Heart left ventricle (tissue), 16 donors: ENCODE measurements at regions of chr9 and their contacts with region 1.

Region 1: DNA sequence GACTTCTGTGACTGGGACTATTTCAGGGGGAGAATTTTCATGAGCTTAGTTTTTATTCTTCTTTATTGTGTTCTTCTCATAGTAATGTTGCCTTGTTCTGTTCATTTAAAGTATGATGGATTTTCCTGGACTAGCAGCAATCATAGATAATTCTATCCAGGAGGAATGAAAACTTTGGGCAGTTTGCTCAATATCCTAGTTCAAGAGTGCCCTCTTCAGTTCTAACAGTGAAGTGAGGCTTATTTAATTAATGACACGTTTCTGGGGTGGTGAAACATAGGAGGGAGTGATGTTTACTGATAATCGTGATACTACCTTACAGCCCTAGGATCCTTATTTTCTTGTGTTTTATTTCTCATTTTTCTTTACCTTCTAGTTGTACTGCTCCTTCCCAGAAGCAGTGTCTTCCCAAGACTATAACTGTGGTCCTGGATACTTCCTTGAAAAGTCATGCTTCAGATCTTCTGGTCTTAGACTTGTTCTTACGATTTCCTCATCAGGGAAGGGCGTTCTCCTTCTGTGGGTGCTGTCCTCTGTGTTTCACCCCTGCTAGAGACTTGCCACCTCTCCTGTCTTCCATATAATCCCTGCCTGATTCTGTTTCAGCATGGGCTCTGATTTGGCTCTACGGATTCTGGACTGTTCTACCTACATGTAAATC is 57.4 kb downstream of the CFAP95 start:
- DNase-seq: no peak
- ATAC-seq: peak in 3 of 4 donors; percentile 48 to 67 (median 52)
- H3K4me3 ChIP-seq: no peak overlapping the region
- H3K27ac ChIP-seq: no peak overlapping the region
- H3K4me1 ChIP-seq: peaks cover 0 to 14% (median 0%) of the 10 kb centered on the region in 12 donors
- H3K27me3 ChIP-seq: no peaks in the 10 kb centered on the region
- CTCF ChIP-seq: peak; percentile 39 to 69 (median 55)
- POLR2A ChIP-seq: no peak

Region 2: GRCh38 chr9:69044240-69045219 is 833.5 kb before region 1 on chr9:
- intact Hi-C with region 1: loop called in 1 of 10 experiments (anchors 10 kb)
- DNase-seq: peak in 1 of 5 donors; percentile 81
- ATAC-seq: peak; percentile 38 to 81 (median 70)
- H3K4me3 ChIP-seq: no peak overlapping the region
- H3K27ac ChIP-seq: peak overlapping the region in 8 of 12 donors; percentile 15 to 71 (median 52)
- H3K4me1 ChIP-seq: peaks cover 0 to 58% (median 17%) of the 10 kb centered on the region in 12 donors
- H3K27me3 ChIP-seq: no peaks in the 10 kb centered on the region
- CTCF ChIP-seq: no peak
- POLR2A ChIP-seq: no peak

Region 3: GRCh38 chr9:69549310-69550202 is 328.4 kb before region 1 on chr9:
- intact Hi-C with region 1: loop called in 5 of 10 experiments (anchors 5 to 10 kb)
- DNase-seq: no peak
- ATAC-seq: peak in 3 of 4 donors; percentile 39 to 70 (median 44)
- H3K4me3 ChIP-seq: no peak overlapping the region
- H3K27ac ChIP-seq: no peak overlapping the region
- H3K4me1 ChIP-seq: peaks cover 0 to 7% (median 2%) of the 10 kb centered on the region in 12 donors
- H3K27me3 ChIP-seq: no peaks in the 10 kb centered on the region
- CTCF ChIP-seq: peak; percentile 74 to 93 (median 86)
- POLR2A ChIP-seq: no peak

Region 4: DNA sequence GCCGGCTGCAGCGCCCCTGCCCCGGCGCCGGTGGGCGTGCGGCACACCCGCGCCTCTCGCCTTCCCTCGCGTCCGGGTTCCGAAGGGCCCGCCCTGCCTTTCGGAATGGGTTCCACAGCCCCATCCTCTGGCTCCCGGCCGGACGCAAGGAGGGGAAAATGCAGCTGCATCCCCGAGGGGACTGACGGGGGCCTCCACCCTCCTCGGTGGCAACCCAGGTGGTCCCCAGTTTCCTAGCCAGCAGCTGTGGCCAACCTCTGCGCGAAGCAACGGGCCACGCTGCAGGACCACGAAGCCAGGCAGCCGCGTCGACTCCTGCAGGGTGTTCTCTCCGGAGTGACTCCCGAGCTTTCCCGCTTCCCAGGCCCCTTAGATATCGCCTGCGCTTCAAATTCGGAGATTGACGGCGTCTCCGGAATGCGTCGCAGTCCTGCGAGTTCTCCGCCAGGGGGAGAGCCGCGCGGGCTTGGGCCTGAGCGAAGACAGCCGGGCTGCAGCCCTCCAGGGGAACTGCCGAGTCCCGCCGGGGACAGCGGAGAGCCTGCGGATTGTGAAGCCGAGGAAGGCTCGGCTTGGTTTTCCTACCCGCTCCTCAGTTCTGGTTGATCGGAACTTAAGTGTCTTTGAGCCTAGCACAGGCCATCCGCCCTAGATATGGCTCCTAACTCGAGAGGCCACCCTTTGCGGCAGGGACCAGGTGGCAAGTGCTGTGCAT is 205.2 kb before region 1 on chr9:
- intact Hi-C with region 1: loop called in 8 of 10 experiments (anchors 5 to 10 kb)
- DNase-seq: peak; percentile 83 to 92 (median 85)
- ATAC-seq: peak; percentile 87 to 93 (median 92)
- H3K4me3 ChIP-seq: peak overlapping the region; percentile 48 to 99 (median 82)
- H3K27ac ChIP-seq: peak overlapping the region; percentile 35 to 89 (median 80)
- H3K4me1 ChIP-seq: peaks cover 0 to 27% (median 8%) of the 10 kb centered on the region in 12 donors
- H3K27me3 ChIP-seq: no peaks in the 10 kb centered on the region
- CTCF ChIP-seq: peak; percentile 76 to 97 (median 86)
- POLR2A ChIP-seq: no peak

Region 5: DNA sequence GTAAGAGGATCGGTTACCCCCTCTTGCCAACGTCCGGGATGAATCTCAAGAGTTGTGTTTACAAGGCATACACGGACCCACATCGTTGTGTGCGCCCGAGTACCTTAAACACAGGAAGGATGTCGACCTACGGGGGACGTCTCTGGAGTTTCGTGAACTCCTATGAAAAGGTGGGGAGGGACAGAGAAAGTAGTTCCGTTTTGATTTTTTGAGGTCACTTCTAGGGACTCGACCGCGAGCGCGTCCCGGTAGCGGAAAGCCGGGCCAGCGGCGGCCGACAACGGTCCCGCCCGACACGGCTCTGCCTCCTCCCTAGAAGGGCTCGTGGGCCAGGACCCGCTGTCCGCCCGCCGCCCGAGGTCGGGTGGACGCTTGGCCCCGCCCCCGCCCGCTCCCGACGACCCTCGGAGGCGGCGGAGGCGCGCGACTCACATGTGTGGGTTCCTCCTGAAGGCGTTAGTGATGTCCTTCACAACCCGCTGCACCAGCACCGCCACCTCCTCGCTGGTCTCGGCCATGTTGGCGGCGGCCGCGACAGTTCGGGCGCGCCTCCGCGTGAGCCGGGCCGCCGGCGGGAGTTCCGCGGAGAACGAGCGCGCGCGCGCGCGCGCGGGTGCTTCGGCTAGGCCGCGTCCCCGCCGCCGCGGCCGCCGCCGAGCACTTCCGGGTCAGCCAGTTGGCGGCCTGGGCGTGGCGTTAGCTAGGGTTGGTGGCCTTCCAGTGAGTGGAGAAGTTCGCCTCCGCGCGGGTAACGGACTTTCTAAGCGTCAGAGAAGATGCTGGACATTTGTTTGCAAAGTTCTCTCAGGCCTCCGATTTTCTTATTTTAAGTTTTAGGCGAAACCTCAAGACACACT is 118.3 kb before region 1 on chr9 and contains the start of gene PTAR1:
- intact Hi-C with region 1: loop called in 3 of 10 experiments (anchors 5 to 10 kb)
- DNase-seq: peak; percentile 93 to 96 (median 94)
- ATAC-seq: peak; percentile 91 to 99 (median 97)
- H3K4me3 ChIP-seq: peak within 1 kb of the TSS; percentile 76 to 98 (median 90)
- H3K27ac ChIP-seq: peak within 1 kb of the TSS; percentile 93 to 98 (median 98)
- H3K4me1 ChIP-seq: peaks cover 3 to 35% (median 19%) of the 10 kb centered on the region in 12 donors
- H3K27me3 ChIP-seq: no peaks in the 10 kb centered on the region
- CTCF ChIP-seq: peak in 1 of 12 donors; percentile 6
- POLR2A ChIP-seq: peak in 1 of 2 donors; percentile 53
- total RNA-seq, gene PTAR1: 18.4 to 37.4 (median 25.8) TPM

Region 6: GRCh38 chr9:69822091-69822750 is 55.8 kb before region 1 on chr9:
- intact Hi-C with region 1: loop called in 1 of 10 experiments (anchors 10 kb)
- DNase-seq: no peak
- ATAC-seq: no peak
- H3K4me3 ChIP-seq: no peak overlapping the region
- H3K27ac ChIP-seq: no peak overlapping the region
- H3K4me1 ChIP-seq: peaks cover 0 to 6% (median 1%) of the 10 kb centered on the region in 12 donors
- H3K27me3 ChIP-seq: peaks cover 0 to 27% (median 10%) of the 10 kb centered on the region in 9 donors
- CTCF ChIP-seq: peak in 1 of 12 donors; percentile 6
- POLR2A ChIP-seq: no peak

Region 7: GRCh38 chr9:70020991-70021571 is 143.1 kb after region 1 on chr9:
- intact Hi-C with region 1: no loop called
- DNase-seq: peak in 1 of 5 donors; percentile 41
- ATAC-seq: no peak
- H3K4me3 ChIP-seq: no peak overlapping the region
- H3K27ac ChIP-seq: no peak overlapping the region
- H3K4me1 ChIP-seq: no peaks in the 10 kb centered on the region
- H3K27me3 ChIP-seq: no peaks in the 10 kb centered on the region
- CTCF ChIP-seq: no peak
- POLR2A ChIP-seq: no peak